ENCODE measurements at regions of chr7 and their contacts with region 1.

Region 1: DNA sequence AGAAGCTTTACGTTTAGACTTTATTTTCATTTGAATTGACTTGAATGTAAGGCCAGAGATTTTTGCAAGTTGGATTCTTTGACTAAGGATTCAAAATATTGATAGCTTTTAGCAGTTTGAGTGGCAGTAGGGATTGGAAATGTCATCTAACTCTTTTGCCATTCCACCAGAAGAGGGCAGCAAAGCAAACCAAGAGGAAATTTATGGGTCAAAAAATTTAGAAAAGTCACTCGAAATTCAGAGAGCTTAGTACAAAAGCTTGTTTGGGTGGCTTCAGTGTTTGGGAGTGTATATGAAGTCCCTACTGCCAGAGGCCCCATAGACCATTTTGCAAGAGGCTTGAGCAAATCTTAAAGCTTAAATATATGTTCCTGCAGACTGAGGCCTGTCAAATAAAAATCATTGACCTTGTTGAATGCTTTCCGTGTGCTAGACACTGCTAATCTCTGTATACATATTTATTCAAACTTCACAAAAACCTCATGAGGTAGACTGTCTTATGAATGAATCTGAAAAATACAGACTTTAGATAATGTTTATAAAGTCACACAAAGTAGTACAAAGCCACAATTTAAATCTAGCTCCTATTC is 44.6 kb upstream of the RSBN1L start:
- DNase-seq: no peak
- H3K4me3 ChIP-seq: no peak overlapping the region
- CTCF ChIP-seq: peak; percentile 55

Region 2: DNA sequence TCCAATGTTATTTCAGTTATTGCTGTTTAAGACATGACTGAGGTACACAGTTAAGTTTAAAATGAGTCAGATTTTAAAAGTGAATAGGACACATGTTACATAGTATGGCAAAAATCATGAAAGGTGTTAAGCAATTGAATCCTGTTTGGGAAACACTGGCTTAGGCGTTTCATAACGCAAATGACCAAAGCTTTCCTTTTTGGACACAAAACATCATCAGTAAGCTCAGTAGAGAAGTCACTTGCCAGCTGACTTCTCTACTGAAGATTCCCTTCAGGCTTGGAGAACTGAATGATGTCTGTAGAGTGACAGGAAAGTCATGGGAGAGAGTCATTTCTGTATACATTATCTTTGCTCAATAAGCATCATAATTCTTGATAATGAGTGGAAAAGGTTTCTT is 19.8 kb before region 1 on chr7:
- CTCF ChIA-PET with region 1: interaction called, 25 read pairs
- POLR2A ChIA-PET with region 1: no interaction called
- DNase-seq: no peak
- H3K4me3 ChIP-seq: no peak overlapping the region
- CTCF ChIP-seq: no peak

Region 3: DNA sequence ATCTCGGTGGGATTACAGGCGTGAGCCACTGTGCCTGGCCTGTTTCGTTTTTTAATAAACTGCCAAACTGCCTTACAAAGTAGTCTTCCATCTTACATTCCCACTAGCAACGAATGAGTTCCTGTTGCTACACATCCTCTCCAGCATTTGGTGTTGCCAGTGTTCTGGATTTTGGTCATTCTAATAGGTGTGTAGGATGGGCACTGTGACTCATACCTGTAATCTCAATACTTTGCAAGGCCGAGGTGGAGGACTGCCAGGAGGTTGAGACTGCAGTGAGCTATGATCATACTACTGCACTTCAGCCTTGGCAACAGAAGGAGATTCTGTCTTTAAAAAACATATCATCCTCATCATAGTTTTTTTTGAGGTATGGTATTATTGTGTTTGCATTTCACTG is 23.2 kb after region 1 on chr7:
- CTCF ChIA-PET with region 1: interaction called, 20 read pairs
- POLR2A ChIA-PET with region 1: no interaction called
- DNase-seq: no peak
- H3K4me3 ChIP-seq: no peak overlapping the region
- CTCF ChIP-seq: no peak

Region 4: DNA sequence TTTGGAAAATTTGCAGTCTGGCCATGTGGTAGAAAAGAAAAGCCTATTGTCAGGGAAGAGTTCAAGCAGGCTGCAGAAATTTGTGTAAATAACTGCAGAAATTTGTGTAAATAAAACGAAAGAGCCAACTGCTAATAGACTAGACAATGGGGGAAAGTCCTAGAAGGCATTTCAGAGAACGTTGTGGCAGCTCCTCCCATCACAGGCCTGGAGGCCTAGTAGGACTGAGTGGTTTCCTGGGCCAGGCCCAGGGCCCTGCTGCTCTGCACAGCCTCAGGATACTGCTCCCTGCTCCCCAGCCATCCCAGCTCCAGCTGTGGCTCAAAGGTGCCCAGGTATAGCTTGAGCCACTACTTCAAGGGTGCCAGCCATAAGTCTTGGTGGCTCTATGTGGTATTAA is 95.5 kb after region 1 on chr7:
- CTCF ChIA-PET with region 1: interaction called, 11 read pairs
- POLR2A ChIA-PET with region 1: no interaction called
- DNase-seq: no peak
- H3K4me3 ChIP-seq: no peak overlapping the region
- CTCF ChIP-seq: no peak

Region 5: DNA sequence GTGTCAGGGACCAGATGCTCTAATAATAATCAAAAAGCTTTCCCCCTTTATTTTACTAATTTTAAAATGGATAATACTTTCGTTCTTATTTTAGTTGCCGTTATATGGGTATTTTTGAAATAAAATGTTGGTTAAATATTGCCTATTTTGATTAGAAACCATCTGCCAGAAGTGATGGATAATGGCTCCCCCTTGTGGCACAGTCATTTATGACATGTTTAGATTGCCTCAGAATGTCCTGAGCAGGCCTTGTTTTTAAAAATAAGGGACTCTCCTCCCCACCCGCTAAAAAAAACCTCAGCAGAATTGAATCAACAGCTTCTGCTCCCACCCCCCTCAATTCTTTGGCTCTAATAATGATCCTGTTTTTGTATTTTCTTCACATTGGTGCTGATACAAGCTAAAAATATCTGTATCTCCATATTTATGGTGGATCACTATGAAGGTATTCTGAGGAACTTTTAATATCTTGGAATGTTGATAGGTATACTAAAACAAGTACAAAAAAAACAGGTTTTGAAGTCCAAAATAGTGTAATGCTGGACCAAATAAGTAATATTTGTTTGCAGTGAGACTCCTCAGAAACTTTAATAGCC is 107.7 kb after region 1 on chr7:
- CTCF ChIA-PET with region 1: interaction called, 203 read pairs
- POLR2A ChIA-PET with region 1: no interaction called
- DNase-seq: no peak
- H3K4me3 ChIP-seq: no peak overlapping the region
- CTCF ChIP-seq: peak; percentile 60

Region 6: GRCh38 chr7:77940647-77941046 is 289.0 kb after region 1 on chr7:
- CTCF ChIA-PET with region 1: interaction called, 30 read pairs
- POLR2A ChIA-PET with region 1: no interaction called
- DNase-seq: no peak
- H3K4me3 ChIP-seq: no peak overlapping the region
- CTCF ChIP-seq: peak; percentile 29

Region 7: DNA sequence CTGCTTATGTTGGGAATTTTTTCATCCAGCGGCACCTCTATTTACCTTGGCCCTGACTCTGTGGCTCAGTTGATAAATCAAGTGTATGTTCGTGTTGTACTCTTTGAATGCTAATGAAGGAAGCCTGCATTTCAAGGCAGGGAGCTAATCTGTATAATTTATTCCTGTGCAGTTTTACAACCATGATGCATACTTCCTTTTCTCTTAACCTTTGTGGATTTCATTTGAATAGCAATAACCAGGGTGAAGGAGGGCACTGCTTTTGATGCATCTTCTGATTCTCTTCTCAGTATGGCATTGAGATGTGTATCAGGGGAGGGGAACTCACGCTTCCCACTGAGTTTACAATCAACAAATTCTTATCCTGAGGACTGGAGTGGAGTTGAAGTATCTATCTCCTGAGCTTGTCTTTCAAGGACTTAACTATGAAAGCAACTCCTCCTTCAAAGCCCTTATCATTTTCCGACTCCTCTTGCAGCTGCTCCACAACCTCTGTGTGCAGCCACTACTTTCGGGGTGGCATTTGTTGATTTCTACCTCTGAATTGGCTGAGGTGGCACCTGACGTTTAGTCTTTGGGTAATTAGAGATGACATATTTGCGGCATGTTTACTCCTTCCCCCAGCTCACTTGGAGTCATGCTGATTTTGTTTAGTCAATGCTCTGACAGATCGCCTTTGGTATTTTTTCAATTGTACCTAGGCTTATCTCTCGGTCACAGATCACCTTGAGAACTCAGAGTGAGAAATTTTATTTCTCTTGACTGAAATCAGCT is 422.1 kb after region 1 on chr7:
- CTCF ChIA-PET with region 1: no interaction called
- POLR2A ChIA-PET with region 1: no interaction called
- DNase-seq: no peak
- H3K4me3 ChIP-seq: no peak overlapping the region
- CTCF ChIP-seq: no peak